GM10248 (cell line): ENCODE measurements at regions of chr14 and their contacts with region 1.

Region 1: DNA sequence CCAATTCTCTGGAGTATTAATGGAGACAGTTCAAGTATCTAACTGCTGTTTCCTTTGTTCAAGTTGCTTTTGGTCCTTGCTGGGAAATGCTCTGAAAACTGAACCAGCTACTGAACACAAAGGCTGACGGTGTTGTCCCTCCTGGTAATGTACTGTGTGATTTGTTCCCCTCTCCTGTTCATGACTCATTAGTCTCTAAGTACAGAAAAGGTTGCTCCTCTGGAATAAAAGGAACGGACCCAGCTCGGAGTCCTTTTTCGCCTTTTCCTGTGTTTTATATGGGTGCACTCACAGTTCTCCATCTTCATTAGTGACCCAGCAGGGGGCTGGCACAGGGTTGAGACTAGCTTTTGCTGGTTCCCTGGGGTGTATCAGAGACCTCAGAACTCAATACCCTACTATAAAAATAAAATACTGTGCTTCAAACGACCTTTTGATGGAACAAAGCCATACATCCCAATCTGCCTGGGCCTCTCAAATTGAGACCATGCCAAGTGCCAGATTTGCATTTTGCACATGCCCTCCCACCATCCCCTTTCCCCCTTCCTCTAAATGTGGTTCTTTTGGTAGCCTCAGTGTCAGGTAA is 269.7 kb downstream of the RAD51B start:
- DNase-seq: no peak
- CTCF ChIP-seq: no peak

Region 2: GRCh38 chr14:68076451-68076850 is 12.8 kb before region 1 on chr14:
- CTCF ChIA-PET with region 1: interaction called, 10 read pairs
- POLR2A ChIA-PET with region 1: no interaction called
- DNase-seq: no peak
- CTCF ChIP-seq: no peak

Region 3: DNA sequence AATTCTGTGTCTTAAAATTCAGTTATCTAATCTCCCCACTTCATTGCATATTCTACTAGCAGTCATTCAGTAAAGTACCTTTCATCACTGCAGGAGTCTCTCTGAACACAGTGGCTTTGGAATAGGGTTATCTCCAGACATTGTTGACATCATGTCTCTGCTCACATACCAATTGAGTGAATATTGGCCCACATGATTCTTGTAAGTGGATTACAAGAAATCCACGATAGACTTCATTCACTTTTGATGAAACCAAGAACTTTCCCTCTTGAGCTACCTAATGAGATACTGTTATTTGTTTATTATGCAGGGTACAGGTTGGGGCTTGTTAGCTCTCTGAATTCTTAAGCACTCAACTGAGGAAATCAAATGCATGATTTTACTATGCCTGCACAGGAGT is 15.3 kb after region 1 on chr14:
- CTCF ChIA-PET with region 1: no interaction called
- POLR2A ChIA-PET with region 1: no interaction called
- DNase-seq: no peak
- CTCF ChIP-seq: no peak

Region 4: DNA sequence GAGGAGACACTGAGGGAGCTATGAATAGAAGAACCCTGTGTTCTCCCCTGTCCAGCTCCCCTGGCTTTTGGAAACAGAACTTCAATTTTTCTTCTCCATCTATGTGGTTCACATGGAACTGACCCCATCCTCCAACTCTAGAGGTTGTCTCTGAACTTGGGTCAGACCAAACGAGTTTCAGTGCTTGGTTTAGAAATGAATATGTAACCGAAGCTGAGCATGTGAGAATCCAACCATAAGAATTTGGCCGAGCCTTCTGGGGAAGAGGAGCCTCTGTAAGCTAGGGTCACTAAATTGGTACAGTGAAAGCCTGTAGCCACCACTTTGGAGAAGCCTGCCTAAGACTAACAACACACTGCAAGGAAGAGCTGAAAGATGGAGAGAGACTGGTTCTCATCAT is 239.3 kb after region 1 on chr14:
- CTCF ChIA-PET with region 1: no interaction called
- POLR2A ChIA-PET with region 1: no interaction called
- DNase-seq: peak; percentile 25
- CTCF ChIP-seq: no peak